ENCODE measurements at regions of chr20 and their contacts with region 1.

Region 1: GRCh38 chr20:44310664-44311639 is at the start of gene FITM2:
- DNase-seq: peak; percentile 98 to 99
- ATAC-seq: peak; percentile 92
- total RNA-seq, gene FITM2: 9.5 to 10.2 TPM

Region 2: GRCh38 chr20:43658069-43658722 is 652.8 kb before region 1 on chr20:
- intact Hi-C with region 1: no loop called
- DNase-seq: no peak
- ATAC-seq: peak; percentile 7

Region 3: GRCh38 chr20:44154521-44155001 is 156.4 kb before region 1 on chr20:
- intact Hi-C with region 1: no loop called
- DNase-seq: no peak
- ATAC-seq: no peak

Region 4: GRCh38 chr20:44217342-44218092 is 93.4 kb before region 1 on chr20:
- intact Hi-C with region 1: loop called (anchors 5 to 10 kb)
- DNase-seq: peak; percentile 64 to 86
- ATAC-seq: peak; percentile 79

Region 5: DNA sequence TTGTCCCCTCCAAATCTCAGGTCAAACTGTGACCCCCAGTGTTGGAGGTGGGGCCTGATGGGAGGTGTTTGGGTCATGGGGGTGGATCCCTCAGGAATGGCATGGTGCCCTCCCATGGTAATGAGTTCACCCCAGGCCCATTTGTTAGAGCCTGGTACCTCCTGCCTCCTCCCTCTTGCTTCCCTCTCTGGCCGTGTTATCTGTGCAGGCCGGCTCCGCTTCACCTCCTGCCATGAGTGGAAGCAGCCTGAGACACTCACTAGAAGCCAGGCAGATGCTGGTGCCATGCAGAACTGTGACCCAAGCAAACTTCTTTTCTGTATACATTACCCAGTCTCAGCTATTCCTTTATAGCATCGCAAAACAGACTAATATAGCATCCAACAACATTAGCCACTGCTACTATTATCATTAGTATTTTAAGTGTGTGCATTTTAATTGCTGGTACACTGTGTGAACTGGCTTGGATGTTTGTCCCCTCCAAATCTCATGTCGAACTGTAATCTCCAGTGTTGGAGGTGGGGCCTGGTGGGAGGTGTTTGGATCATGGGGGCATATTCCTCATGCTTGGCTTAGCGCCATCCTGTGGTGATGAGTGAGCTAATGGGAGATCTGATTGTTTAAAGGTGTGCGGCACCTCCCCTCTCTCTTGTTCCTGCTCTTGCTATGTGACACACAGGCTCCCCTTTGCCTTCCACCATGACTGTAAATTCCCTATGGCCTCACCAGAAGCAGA is 88.2 kb before region 1 on chr20:
- intact Hi-C with region 1: loop called (anchors 5 to 10 kb)
- DNase-seq: no peak
- ATAC-seq: peak; percentile 16

Region 6: GRCh38 chr20:44866703-44867335 is 555.9 kb after region 1 on chr20:
- intact Hi-C with region 1: no loop called
- DNase-seq: no peak
- ATAC-seq: no peak